Activated CD4-positive, alpha-beta T cell treated with anti-CD3 and anti-CD28 coated beads, Interleukin-2, amount 10 ng/mL, durations not matched to agents 24 days and 14 days (primary cell): ENCODE measurements at regions of chr6 and their contacts with region 1.

Region 1: GRCh38 chr6:16761471-16762267 is 409 bp upstream of the ATXN1 start:
- DNase-seq: peak; percentile 95
- H3K4me3 Mint-ChIP-seq: peak overlapping the region; percentile 99
- H3K27ac Mint-ChIP-seq: peak overlapping the region; percentile 100
- H3K4me1 Mint-ChIP-seq: peaks cover 56% of the 10 kb centered on the region
- H3K27me3 Mint-ChIP-seq: no peaks in the 10 kb centered on the region

Region 2: GRCh38 chr6:16128759-16129622 is 632.7 kb before region 1 on chr6 and contains the start of gene MYLIP:
- intact Hi-C with region 1: loop called (anchors 10 kb)
- DNase-seq: peak; percentile 98
- H3K4me3 Mint-ChIP-seq: peak within 1 kb of the TSS; percentile 91
- H3K27ac Mint-ChIP-seq: peak within 1 kb of the TSS; percentile 93
- H3K4me1 Mint-ChIP-seq: peaks cover 32% of the 10 kb centered on the region
- H3K27me3 Mint-ChIP-seq: peaks cover 20% of the 10 kb centered on the region
- total RNA-seq, gene MYLIP: 18.3 and 18.5 TPM in 2 replicates

Region 3: GRCh38 chr6:16420715-16421461 is 340.8 kb before region 1 on chr6:
- intact Hi-C with region 1: loop called (anchors 1 kb)
- DNase-seq: peak; percentile 87
- H3K4me3 Mint-ChIP-seq: peak overlapping the region; percentile 79
- H3K27ac Mint-ChIP-seq: peak overlapping the region; percentile 90
- H3K4me1 Mint-ChIP-seq: peaks cover 50% of the 10 kb centered on the region
- H3K27me3 Mint-ChIP-seq: no peaks in the 10 kb centered on the region

Region 4: DNA sequence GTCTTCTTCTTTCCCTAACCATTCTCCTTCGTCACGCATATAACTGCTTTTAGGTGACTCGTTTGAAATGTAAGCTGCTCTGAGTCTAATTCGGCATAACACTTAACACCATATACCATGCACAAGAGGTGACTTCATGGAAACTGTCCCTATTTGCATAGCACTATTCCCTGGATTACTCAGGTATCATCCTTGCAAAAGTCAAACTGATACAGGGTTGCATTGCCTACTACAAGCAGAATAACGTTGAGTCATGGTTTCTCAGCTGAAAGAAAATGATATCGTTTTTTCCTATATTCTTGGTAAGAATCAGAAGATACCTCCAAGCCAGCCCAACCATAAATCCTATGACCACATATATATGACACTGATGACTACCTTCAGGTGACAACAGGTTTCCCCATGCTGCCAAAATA is 227.9 kb before region 1 on chr6:
- intact Hi-C with region 1: loop called (anchors 1 kb)
- DNase-seq: no peak
- H3K4me3 Mint-ChIP-seq: no peak overlapping the region
- H3K27ac Mint-ChIP-seq: peak overlapping the region; percentile 46
- H3K4me1 Mint-ChIP-seq: peaks cover 19% of the 10 kb centered on the region
- H3K27me3 Mint-ChIP-seq: no peaks in the 10 kb centered on the region

Region 5: DNA sequence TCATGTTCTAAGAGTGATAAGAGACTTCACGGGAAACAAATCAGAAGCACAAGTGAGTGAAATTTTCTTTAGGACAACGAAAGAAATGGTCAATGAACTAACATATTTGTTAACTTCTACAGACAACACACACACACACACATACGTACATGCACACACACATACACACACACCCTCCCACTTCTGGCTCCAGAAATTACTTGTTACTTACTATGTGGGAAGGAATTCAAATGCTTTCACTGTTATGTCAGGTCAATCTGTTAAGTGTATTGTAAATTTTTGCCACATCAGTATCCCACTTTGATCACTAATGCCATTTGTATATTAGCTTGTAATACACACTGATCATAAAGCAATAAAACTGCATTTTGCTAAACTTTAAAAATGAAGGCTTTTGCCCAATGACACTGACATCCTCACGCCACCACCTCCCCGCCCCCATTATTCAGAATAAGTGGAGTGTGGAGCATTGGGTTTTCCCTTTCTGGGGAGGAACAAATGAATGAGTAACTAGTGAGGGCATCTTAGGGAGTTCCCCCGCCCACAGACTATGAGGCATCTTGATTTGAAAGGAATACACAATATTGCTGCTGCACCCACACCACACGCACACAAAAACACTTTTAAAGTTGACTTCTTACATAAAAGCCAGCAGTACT is 76.6 kb before region 1 on chr6:
- intact Hi-C with region 1: loop called (anchors 1 kb)
- DNase-seq: peak; percentile 89
- H3K4me3 Mint-ChIP-seq: peak overlapping the region; percentile 67
- H3K27ac Mint-ChIP-seq: peak overlapping the region; percentile 92
- H3K4me1 Mint-ChIP-seq: peaks cover 82% of the 10 kb centered on the region
- H3K27me3 Mint-ChIP-seq: no peaks in the 10 kb centered on the region

Region 6: DNA sequence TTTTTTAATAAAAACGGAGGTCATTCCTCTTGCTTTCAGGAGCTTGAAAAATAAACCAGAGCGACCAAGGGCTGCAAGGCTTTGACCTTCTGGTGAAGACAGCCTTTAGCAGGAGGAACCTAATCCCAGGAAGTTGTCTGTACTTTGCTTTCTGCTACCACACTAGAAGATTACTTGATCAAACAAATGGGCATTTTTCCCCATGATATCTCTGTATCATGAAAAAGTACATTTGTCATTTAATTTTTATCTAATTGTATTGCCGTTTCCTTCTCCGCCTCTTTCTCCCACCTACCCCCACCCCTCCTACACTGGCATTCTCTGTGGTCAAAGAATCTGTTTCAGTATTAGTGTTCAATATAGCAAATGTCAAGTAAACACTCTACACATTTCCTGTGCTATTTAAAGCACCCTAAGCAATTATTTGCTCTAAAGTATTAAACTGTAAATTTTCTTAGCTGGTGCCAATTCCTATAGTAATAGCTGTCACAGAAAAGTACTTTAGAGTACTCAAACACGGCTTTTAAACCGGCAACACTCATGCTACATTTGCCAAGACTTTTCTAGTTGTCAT is 30.1 kb before region 1 on chr6:
- intact Hi-C with region 1: loop called (anchors 1 kb)
- DNase-seq: peak; percentile 80
- H3K4me3 Mint-ChIP-seq: peak overlapping the region; percentile 69
- H3K27ac Mint-ChIP-seq: peak overlapping the region; percentile 76
- H3K4me1 Mint-ChIP-seq: peaks cover 62% of the 10 kb centered on the region
- H3K27me3 Mint-ChIP-seq: no peaks in the 10 kb centered on the region

Region 7: DNA sequence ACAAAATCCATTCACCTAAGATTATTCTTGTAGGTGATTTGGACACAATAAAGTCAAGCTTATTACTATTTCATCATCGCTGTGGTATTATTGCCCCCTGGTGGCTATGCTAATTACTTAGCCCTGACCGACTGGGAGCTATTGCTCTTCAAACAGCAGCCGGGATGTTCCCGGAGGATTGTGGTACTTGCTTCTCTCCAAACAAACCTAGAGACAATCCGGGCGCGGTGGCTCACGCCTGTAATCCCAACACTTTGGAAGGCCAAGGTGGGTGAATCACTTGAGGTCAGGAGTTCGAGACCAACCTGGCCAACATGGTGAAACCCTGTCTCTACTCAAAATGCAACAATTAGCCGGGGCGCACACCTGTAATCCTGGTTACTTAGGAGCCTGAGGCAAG is 324.8 kb after region 1 on chr6:
- intact Hi-C with region 1: loop called (anchors 5 kb)
- DNase-seq: peak; percentile 63
- H3K4me3 Mint-ChIP-seq: no peak overlapping the region
- H3K27ac Mint-ChIP-seq: no peak overlapping the region
- H3K4me1 Mint-ChIP-seq: no peaks in the 10 kb centered on the region
- H3K27me3 Mint-ChIP-seq: peaks cover 4% of the 10 kb centered on the region